Ascending aorta (tissue), 2 donors: ENCODE measurements at regions of chr12 and their contacts with region 1.

Region 1: DNA sequence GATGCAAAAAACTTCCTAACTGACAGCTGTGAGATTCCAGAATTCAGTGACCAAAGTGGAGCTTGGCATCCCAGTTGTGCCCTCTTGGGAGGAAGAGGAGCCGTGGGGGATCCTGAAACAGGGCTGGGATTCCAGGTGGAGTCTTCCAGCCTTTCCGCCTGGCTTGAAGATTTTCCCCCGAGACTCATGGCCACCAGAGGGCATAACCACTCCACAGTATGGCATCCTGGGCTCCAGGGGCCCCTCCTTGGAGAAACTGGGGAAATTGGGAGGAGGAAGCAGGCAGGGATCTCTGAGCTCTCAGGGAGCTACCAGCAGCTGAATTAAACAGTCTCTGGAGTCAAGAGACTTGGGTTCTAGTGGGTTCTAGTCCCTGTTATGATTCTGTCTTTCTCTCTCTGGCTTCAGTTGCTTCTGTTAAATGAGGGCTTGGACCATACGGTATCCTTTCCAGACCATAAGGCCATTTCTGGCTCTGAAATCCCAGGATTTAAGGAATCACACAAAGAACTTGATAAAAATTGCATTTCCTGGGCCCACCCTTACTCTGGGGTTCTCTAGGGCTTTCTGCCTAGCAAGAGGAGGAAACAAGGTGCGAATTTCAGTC is 2.6 kb upstream of the TAMALIN start:
- DNase-seq: peak in 1 of 2 donors; percentile 78
- H3K4me3 ChIP-seq: no peak overlapping the region
- H3K27ac ChIP-seq: no peak overlapping the region
- H3K4me1 ChIP-seq: peaks cover 0 to 16% of the 10 kb centered on the region in 2 donors
- H3K27me3 ChIP-seq: no peaks in the 10 kb centered on the region
- CTCF ChIP-seq: peak; percentile 52 to 76 (median 72)

Region 2: GRCh38 chr12:51653431-51653830 is 350.7 kb before region 1 on chr12:
- intact Hi-C with region 1: no loop called
- DNase-seq: no peak
- H3K4me3 ChIP-seq: no peak overlapping the region
- H3K27ac ChIP-seq: no peak overlapping the region
- H3K4me1 ChIP-seq: no peaks in the 10 kb centered on the region
- H3K27me3 ChIP-seq: no peaks in the 10 kb centered on the region
- CTCF ChIP-seq: no peak

Region 3: DNA sequence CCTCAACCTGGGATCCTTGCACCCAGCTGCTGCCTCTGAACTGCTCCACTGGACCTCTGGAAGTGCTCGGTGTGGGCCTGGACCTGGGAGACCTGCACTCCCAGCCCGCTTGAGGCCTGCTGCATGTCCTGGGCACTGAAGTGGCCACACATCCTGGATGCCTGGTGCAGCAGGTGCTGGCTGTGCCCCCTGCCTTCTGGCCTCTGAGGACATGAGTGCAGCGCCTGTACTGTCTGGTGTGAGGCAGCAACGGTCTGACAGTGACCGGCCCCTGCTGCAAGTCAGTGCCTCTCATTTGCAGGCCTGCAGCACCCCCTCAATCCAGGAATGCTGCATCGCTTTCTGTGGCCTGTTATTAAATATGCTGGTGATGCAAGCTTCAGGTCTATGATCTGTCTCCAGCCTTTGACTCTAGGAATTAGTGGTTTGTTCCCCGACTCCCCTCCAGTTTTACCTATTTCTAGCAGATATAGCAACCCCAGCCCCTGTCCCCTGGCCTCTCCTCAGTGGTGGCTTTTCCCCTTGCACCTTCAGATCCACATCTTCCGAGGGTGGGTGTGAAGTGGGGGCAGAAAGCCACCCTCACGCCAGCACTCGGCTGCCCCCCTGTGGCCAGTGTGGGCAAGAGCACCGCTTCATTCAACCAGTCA is 79.0 kb after region 1 on chr12:
- intact Hi-C with region 1: loop called (anchors 1 kb)
- DNase-seq: peak in 1 of 2 donors; percentile 79
- H3K4me3 ChIP-seq: no peak overlapping the region
- H3K27ac ChIP-seq: peak overlapping the region in 1 of 2 donors; percentile 67
- H3K4me1 ChIP-seq: peaks cover 7 to 21% of the 10 kb centered on the region in 2 donors
- H3K27me3 ChIP-seq: no peaks in the 10 kb centered on the region
- CTCF ChIP-seq: peak; percentile 93 to 99 (median 97)